ENCODE measurements at regions of chr17 and their contacts with region 1.

Region 1: DNA sequence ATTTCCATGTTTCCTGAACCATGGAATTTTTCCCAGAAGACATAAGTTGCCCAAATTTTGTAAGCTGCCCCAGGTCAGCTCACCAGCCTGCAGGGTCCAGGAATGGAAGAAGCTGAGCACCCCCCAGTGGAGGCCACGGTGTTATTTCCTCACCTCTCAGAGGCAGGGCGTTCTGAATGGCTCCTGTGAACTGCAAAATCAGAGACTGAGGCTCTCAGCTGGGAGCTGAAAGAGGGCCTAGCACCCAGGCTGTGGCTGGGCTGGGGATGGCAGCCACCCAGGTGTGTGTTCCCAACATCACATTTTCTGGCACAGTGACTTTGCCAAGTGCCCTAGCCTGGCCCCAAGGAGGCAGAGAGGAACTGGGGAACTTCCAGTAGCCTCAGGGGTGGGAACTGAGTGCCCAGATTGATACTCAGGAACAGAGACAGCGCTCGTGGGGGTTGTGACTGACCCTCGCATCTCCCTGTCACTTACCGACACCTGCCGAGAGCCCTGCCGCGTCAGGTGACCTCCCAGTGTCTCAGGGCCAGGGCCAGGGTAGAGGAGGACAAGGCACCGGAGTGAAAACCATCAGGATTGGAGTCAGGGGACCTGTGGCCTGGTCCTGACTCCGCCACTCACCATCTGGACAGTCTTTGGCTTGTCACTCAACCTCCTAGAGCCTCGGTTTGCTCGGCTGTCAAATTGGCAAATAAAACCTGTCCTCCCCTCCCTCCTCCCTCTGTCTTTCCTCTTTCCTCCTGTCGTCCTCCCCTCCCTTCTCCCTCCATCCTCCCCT is 11.3 kb downstream of the CACNG4 start:
- DNase-seq: peak; percentile 55
- ATAC-seq: peak; percentile 81
- H3K4me3 ChIP-seq: no peak overlapping the region
- H3K27ac ChIP-seq: no peak overlapping the region
- H3K4me1 ChIP-seq: no peaks in the 10 kb centered on the region
- H3K27me3 ChIP-seq: peaks cover 7 to 68% of the 10 kb centered on the region in 2 experiments; a peak in 4 of 5 replicates
- CTCF ChIP-seq: peak; percentile 80
- EP300 ChIP-seq: no peak
- POLR2A ChIP-seq: no peak
- RAD21 ChIP-seq: peak; percentile 80

Region 2: GRCh38 chr17:66727639-66728570 is 247.9 kb before region 1 on chr17:
- CTCF ChIA-PET with region 1: no interaction called
- POLR2A ChIA-PET with region 1: no interaction called
- in situ Hi-C with region 1: no loop called
- intact Hi-C with region 1: loop called (anchors 5 kb)
- DNase-seq: peak; percentile 47
- ATAC-seq: peak; percentile 93
- H3K4me3 ChIP-seq: no peak overlapping the region
- H3K27ac ChIP-seq: no peak overlapping the region
- H3K4me1 ChIP-seq: no peaks in the 10 kb centered on the region
- H3K27me3 ChIP-seq: no peaks in the 10 kb centered on the region
- CTCF ChIP-seq: peak; percentile 89
- EP300 ChIP-seq: no peak
- POLR2A ChIP-seq: no peak
- RAD21 ChIP-seq: peak; percentile 58; the same call in 1 of the 2 replicates

Region 3: GRCh38 chr17:66915204-66916096 is 60.3 kb before region 1 on chr17:
- CTCF ChIA-PET with region 1: interaction called, 9 read pairs
- POLR2A ChIA-PET with region 1: no interaction called
- in situ Hi-C with region 1: no loop called
- intact Hi-C with region 1: loop called (anchors 1 kb)
- DNase-seq: peak; percentile 21
- ATAC-seq: peak; percentile 88
- H3K4me3 ChIP-seq: no peak overlapping the region
- H3K27ac ChIP-seq: no peak overlapping the region
- H3K4me1 ChIP-seq: no peaks in the 10 kb centered on the region
- H3K27me3 ChIP-seq: peaks cover 0 to 51% of the 10 kb centered on the region in 2 experiments; a peak in 4 of 5 replicates
- CTCF ChIP-seq: peak; percentile 69
- EP300 ChIP-seq: no peak
- POLR2A ChIP-seq: no peak
- RAD21 ChIP-seq: peak; percentile 63

Region 4: DNA sequence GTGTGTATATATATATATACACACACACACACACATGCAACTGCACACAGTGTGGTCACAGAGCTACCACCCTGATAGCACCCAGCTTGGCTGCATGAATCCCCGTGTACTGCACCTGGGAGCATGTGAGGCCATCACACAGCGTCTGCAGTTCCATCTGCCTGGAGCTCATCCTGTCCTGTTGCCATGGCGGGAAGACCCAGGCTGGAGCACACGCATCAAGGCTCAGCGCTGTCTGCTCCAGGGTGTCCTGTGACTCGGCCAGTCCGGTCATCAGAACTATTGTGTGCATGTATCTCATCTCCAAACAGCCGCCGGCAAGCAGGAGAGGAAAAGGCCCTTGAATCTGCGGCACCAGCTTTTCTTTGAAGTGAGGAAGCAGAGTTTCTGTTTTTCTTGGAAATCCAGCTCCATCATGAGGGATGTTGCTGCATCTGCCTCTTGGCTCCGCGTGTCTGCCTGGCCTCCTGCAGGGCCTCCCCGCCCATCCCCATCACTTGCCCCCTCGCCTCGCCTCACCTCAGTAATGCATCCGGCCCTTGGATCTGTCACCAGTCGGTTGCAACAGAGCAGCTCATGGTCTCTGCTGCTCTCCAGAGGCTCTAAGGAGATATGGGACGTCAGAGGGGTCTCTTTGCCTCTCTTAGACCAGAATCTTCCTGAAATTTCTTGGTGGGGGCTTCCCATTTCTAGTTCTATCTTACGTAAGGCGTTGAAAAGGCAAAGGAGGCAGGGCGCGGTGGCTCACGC is 12.4 kb after region 1 on chr17:
- CTCF ChIA-PET with region 1: no interaction called
- POLR2A ChIA-PET with region 1: no interaction called
- in situ Hi-C with region 1: no loop called
- intact Hi-C with region 1: no loop called
- DNase-seq: no peak
- ATAC-seq: peak; percentile 47
- H3K4me3 ChIP-seq: no peak overlapping the region
- H3K27ac ChIP-seq: no peak overlapping the region
- H3K4me1 ChIP-seq: no peaks in the 10 kb centered on the region
- H3K27me3 ChIP-seq: peaks cover 9 to 83% of the 10 kb centered on the region in 2 experiments
- CTCF ChIP-seq: peak; percentile 53
- EP300 ChIP-seq: no peak
- POLR2A ChIP-seq: no peak
- RAD21 ChIP-seq: no peak

Measured in HepG2 (cell line).